CD4-positive, alpha-beta T cell (primary cell): ENCODE measurements at regions of chr12 and their contacts with region 1.

Region 1: GRCh38 chr12:14995583-14996425 is 23.0 kb downstream of the PDE6H start:
- DNase-seq: peak in 3 of 14 experiments; percentile 72 to 83 (median 83)
- ATAC-seq: peak; percentile 72
- H3K4me3 ChIP-seq: no peak overlapping the region
- H3K4me3 Mint-ChIP-seq: peak overlapping the region; percentile 60
- H3K27ac ChIP-seq: no peak overlapping the region
- H3K27ac Mint-ChIP-seq: peak overlapping the region; percentile 82
- H3K4me1 ChIP-seq: peaks cover 24% of the 10 kb centered on the region
- H3K4me1 Mint-ChIP-seq: peaks cover 36% of the 10 kb centered on the region
- H3K27me3 ChIP-seq: no peaks in the 10 kb centered on the region
- H3K27me3 Mint-ChIP-seq: no peaks in the 10 kb centered on the region
- CTCF ChIP-seq: peak; percentile 76

Region 2: GRCh38 chr12:14629832-14630710 is 365.7 kb before region 1 on chr12:
- CTCF ChIA-PET with region 1: no interaction called
- POLR2A ChIA-PET with region 1: no interaction called
- intact Hi-C with region 1: loop called (anchors 2 kb)
- DNase-seq: peak; percentile 36 to 81 (median 52)
- ATAC-seq: peak; percentile 100
- H3K4me3 ChIP-seq: no peak overlapping the region
- H3K4me3 Mint-ChIP-seq: no peak overlapping the region
- H3K27ac ChIP-seq: no peak overlapping the region
- H3K27ac Mint-ChIP-seq: no peak overlapping the region
- H3K4me1 ChIP-seq: no peaks in the 10 kb centered on the region
- H3K4me1 Mint-ChIP-seq: no peaks in the 10 kb centered on the region
- H3K27me3 ChIP-seq: no peaks in the 10 kb centered on the region
- H3K27me3 Mint-ChIP-seq: peaks cover 4% of the 10 kb centered on the region
- CTCF ChIP-seq: peak; percentile 100

Region 3: DNA sequence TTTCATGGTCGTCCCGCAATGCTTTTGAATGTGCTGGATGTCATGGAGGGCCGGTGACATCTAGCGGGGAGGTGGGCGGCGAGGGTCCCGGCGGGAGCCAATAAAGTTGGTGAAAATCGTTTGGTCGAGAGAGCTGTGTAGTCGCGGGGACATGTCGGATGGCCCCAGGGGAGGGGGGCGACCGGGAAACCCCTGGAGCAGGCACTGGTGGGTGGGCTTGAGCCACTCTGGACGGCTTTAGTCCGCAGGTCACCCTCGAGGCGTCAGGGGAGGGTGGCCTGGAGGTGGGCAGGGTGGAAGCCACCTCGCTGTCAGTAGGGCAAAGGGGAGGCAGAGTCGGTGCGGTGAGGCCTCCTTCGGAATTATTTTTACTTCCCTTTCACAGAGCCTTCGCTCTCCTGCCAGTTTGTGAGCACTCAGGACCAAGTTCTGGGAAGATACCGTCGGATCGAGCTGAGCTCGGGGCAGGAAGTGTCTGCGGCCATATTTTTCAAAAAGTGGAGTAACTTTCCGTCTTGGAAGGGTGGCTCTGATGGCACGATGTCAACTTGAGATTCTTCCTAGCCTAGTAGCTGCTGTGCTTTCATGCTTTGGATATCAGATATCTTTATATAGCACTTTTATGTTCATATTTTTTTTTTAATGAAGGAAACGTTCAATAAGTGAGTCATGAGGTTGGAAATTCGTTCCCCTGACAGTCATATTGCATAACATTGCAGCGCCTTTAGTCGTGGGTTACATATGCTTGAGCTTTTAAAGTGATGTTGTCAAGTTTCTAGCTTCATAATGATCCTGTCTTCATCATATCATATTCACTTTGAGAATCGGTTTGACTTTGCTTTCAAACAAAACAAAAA is 220.7 kb before region 1 on chr12:
- CTCF ChIA-PET with region 1: interaction called, 8 read pairs
- POLR2A ChIA-PET with region 1: interaction called, 22 read pairs
- intact Hi-C with region 1: loop called in 1 of 2 experiments (anchors 5 kb)
- DNase-seq: peak in 11 of 14 experiments; percentile 2 to 56 (median 14)
- ATAC-seq: no peak
- H3K4me3 ChIP-seq: peak overlapping the region; percentile 83
- H3K4me3 Mint-ChIP-seq: peak overlapping the region; percentile 97
- H3K27ac ChIP-seq: peak overlapping the region; percentile 61 to 79
- H3K27ac Mint-ChIP-seq: peak overlapping the region; percentile 100
- H3K4me1 ChIP-seq: peaks cover 28% of the 10 kb centered on the region
- H3K4me1 Mint-ChIP-seq: peaks cover 63% of the 10 kb centered on the region
- H3K27me3 ChIP-seq: no peaks in the 10 kb centered on the region
- H3K27me3 Mint-ChIP-seq: no peaks in the 10 kb centered on the region
- CTCF ChIP-seq: no peak

Region 4: DNA sequence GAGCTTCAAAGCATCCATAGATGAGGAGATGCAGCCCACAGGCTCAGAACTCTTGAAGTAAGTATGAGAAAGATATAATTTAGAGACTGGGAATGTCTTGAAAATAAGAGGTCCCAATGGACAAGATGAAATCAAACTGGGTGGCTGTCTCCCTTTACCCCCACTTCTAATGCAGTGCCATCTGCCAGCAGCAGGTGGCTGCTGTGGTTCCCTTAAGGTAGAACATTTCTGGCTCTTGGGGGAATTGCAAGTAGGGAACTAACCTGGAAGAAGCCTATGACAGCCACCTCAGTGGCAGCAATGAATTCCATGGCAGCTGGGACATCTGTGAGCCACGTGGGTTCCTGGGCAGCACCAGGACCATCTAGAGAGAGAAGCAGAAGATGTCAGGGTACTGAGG is 58.1 kb before region 1 on chr12:
- CTCF ChIA-PET with region 1: interaction called, 30 read pairs
- POLR2A ChIA-PET with region 1: interaction called, 19 read pairs
- intact Hi-C with region 1: loop called (anchors 2 kb)
- DNase-seq: peak in 5 of 14 experiments; percentile 33 to 68 (median 55)
- ATAC-seq: peak; percentile 35
- H3K4me3 ChIP-seq: no peak overlapping the region
- H3K4me3 Mint-ChIP-seq: no peak overlapping the region
- H3K27ac ChIP-seq: no peak overlapping the region
- H3K27ac Mint-ChIP-seq: peak overlapping the region; percentile 72
- H3K4me1 ChIP-seq: peaks cover 17% of the 10 kb centered on the region
- H3K4me1 Mint-ChIP-seq: peaks cover 63% of the 10 kb centered on the region
- H3K27me3 ChIP-seq: no peaks in the 10 kb centered on the region
- H3K27me3 Mint-ChIP-seq: no peaks in the 10 kb centered on the region
- CTCF ChIP-seq: peak; percentile 59

Region 5: DNA sequence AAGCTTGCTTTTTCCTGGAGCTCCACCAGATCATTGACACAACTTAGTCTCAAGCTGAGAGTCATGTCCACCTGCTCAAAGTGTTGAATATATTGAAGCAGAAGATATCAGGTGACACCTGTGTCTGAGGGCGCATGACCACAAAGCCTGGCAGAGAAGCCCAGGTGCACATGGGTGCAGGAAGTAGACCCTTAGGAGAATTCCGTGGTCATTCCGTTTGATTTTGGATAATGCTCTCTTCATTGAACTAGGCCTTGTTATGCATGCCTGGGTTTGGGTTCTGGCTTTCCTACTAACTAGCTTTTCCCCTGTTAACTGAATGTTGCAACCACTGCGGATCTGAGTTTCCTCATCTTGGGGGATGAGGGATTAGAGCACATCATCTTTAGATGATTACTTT is 41.5 kb before region 1 on chr12:
- CTCF ChIA-PET with region 1: interaction called, 15 read pairs
- POLR2A ChIA-PET with region 1: interaction called, 74 read pairs
- intact Hi-C with region 1: no loop called
- DNase-seq: peak in 4 of 14 experiments; percentile 31 to 67 (median 59)
- ATAC-seq: no peak
- H3K4me3 ChIP-seq: peak overlapping the region; percentile 80
- H3K4me3 Mint-ChIP-seq: peak overlapping the region; percentile 88
- H3K27ac ChIP-seq: peak overlapping the region; percentile 90 to 95
- H3K27ac Mint-ChIP-seq: peak overlapping the region; percentile 94
- H3K4me1 ChIP-seq: peaks cover 62% of the 10 kb centered on the region
- H3K4me1 Mint-ChIP-seq: peaks cover 88% of the 10 kb centered on the region
- H3K27me3 ChIP-seq: no peaks in the 10 kb centered on the region
- H3K27me3 Mint-ChIP-seq: no peaks in the 10 kb centered on the region
- CTCF ChIP-seq: no peak

Region 6: GRCh38 chr12:15044471-15044870 is 48.7 kb after region 1 on chr12:
- CTCF ChIA-PET with region 1: no interaction called
- POLR2A ChIA-PET with region 1: no interaction called
- intact Hi-C with region 1: no loop called
- DNase-seq: no peak
- ATAC-seq: no peak
- H3K4me3 ChIP-seq: no peak overlapping the region
- H3K4me3 Mint-ChIP-seq: no peak overlapping the region
- H3K27ac ChIP-seq: no peak overlapping the region
- H3K27ac Mint-ChIP-seq: no peak overlapping the region
- H3K4me1 ChIP-seq: no peaks in the 10 kb centered on the region
- H3K4me1 Mint-ChIP-seq: peaks cover 9% of the 10 kb centered on the region
- H3K27me3 ChIP-seq: no peaks in the 10 kb centered on the region
- H3K27me3 Mint-ChIP-seq: no peaks in the 10 kb centered on the region
- CTCF ChIP-seq: no peak

Region 7: GRCh38 chr12:15186597-15186996 is 190.8 kb after region 1 on chr12:
- CTCF ChIA-PET with region 1: no interaction called
- POLR2A ChIA-PET with region 1: no interaction called
- intact Hi-C with region 1: no loop called
- DNase-seq: no peak
- ATAC-seq: no peak
- H3K4me3 ChIP-seq: no peak overlapping the region
- H3K4me3 Mint-ChIP-seq: no peak overlapping the region
- H3K27ac ChIP-seq: no peak overlapping the region
- H3K27ac Mint-ChIP-seq: no peak overlapping the region
- H3K4me1 ChIP-seq: no peaks in the 10 kb centered on the region
- H3K4me1 Mint-ChIP-seq: no peaks in the 10 kb centered on the region
- H3K27me3 ChIP-seq: no peaks in the 10 kb centered on the region
- H3K27me3 Mint-ChIP-seq: peaks cover 11% of the 10 kb centered on the region
- CTCF ChIP-seq: no peak

Region 8: GRCh38 chr12:15220994-15221885 is 225.4 kb after region 1 on chr12 and contains the start of gene RERG:
- CTCF ChIA-PET with region 1: interaction called, 5 read pairs
- POLR2A ChIA-PET with region 1: interaction called, 9 read pairs
- intact Hi-C with region 1: loop called (anchors 5 kb)
- DNase-seq: peak; percentile 50 to 86 (median 68)
- ATAC-seq: peak; percentile 99
- H3K4me3 ChIP-seq: peak within 1 kb of the TSS; percentile 49
- H3K4me3 Mint-ChIP-seq: peak within 1 kb of the TSS; percentile 71
- H3K27ac ChIP-seq: no peak within 1 kb of the TSS
- H3K27ac Mint-ChIP-seq: no peak within 1 kb of the TSS
- H3K4me1 ChIP-seq: peaks cover 10% of the 10 kb centered on the region
- H3K4me1 Mint-ChIP-seq: peaks cover 13% of the 10 kb centered on the region
- H3K27me3 ChIP-seq: peaks cover 7 to 34% of the 10 kb centered on the region in 2 experiments
- H3K27me3 Mint-ChIP-seq: peaks cover 42% of the 10 kb centered on the region
- CTCF ChIP-seq: peak; percentile 94
- total RNA-seq, gene RERG: not detected